Caco-2 (cell line): ENCODE measurements at regions of chr11 and their contacts with region 1.

Region 1: GRCh38 chr11:92286709-92287108 is 62.1 kb downstream of the FAT3 start:
- DNase-seq: peak; percentile 51 to 69
- H3K4me3 ChIP-seq: no peak overlapping the region
- H3K4me3 Mint-ChIP-seq: peak overlapping the region; percentile 50
- H3K27ac Mint-ChIP-seq: peak overlapping the region; percentile 80
- H3K4me1 ChIP-seq: peaks cover 61% of the 10 kb centered on the region
- H3K4me1 Mint-ChIP-seq: peaks cover 68% of the 10 kb centered on the region
- H3K27me3 ChIP-seq: no peaks in the 10 kb centered on the region
- H3K27me3 Mint-ChIP-seq: no peaks in the 10 kb centered on the region
- CTCF ChIP-seq: no peak

Region 2: DNA sequence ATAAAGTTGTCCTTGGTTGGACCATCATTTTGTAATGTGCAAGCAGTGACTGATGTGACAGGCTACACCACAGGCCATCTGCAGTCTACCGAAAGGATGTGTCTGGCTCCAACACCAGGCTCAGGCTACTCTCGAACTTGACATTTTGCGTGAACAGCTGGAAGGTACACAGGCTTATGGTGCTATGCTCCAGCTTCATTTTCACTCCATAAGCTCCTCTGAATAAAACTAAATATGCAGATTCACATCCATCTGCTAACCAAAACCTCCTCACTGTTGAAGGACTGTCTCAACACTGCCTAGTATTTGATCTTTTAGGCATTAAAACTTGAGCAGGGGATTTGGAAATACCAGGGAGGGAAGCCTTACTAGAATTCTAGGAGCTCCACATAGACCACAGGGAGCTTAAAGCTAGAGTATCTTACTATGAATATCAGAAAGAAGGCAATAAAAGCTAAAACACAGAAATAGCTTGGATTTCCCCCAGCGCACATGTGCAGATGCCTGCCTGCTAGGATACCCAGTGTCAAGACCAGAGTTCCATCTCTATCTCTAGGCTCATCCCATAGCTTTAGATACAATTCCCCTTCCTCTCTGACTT is 446.0 kb before region 1 on chr11:
- CTCF ChIA-PET with region 1: no interaction called
- POLR2A ChIA-PET with region 1: no interaction called
- intact Hi-C with region 1: no loop called
- DNase-seq: no peak
- H3K4me3 ChIP-seq: no peak overlapping the region
- H3K4me3 Mint-ChIP-seq: no peak overlapping the region
- H3K27ac Mint-ChIP-seq: no peak overlapping the region
- H3K4me1 ChIP-seq: no peaks in the 10 kb centered on the region
- H3K4me1 Mint-ChIP-seq: peaks cover 7% of the 10 kb centered on the region
- H3K27me3 ChIP-seq: no peaks in the 10 kb centered on the region; the same call in 1 of the 2 replicates
- H3K27me3 Mint-ChIP-seq: no peaks in the 10 kb centered on the region
- CTCF ChIP-seq: no peak

Region 3: GRCh38 chr11:92070026-92070889 is 216.5 kb before region 1 on chr11:
- CTCF ChIA-PET with region 1: no interaction called
- POLR2A ChIA-PET with region 1: no interaction called
- intact Hi-C with region 1: no loop called
- DNase-seq: no peak
- H3K4me3 ChIP-seq: no peak overlapping the region
- H3K4me3 Mint-ChIP-seq: no peak overlapping the region
- H3K27ac Mint-ChIP-seq: no peak overlapping the region
- H3K4me1 ChIP-seq: no peaks in the 10 kb centered on the region
- H3K4me1 Mint-ChIP-seq: no peaks in the 10 kb centered on the region
- H3K27me3 ChIP-seq: no peaks in the 10 kb centered on the region
- H3K27me3 Mint-ChIP-seq: peaks cover 4% of the 10 kb centered on the region
- CTCF ChIP-seq: peak in 1 of 2 experiments; percentile 18

Region 4: DNA sequence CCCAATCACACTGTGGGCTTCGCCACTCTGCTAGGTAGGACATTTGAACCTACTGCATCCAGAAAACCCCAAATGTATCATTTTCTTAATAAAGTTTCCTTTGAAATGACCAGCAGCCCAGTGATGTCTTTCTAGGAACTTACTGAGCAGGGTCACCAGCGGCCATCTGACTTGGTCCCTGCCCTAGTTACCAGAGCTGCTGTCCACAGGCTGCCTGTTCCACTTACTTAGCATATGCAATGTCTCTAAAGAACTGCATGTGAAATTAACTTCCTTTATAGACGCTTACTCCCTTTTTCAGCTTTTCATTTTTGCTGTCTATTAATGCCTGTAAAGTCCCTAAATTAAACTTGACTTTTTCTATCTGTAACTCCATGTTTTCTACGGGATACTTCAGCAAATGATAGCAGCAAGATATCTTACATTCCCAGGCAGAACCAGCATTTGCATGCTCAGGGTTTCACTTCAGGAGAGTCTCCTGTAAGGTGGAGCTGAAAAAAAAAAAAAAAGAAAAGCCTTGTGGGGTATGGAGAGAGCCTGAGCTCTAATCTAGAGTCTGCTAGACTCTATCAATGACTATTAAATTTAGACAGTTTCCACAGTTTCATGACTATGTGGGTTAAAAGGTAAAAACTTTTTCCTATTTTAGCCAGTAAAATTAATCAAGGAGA is 62.9 kb after region 1 on chr11:
- CTCF ChIA-PET with region 1: no interaction called
- POLR2A ChIA-PET with region 1: interaction called, 10 read pairs
- intact Hi-C with region 1: no loop called
- DNase-seq: no peak
- H3K4me3 ChIP-seq: no peak overlapping the region
- H3K4me3 Mint-ChIP-seq: no peak overlapping the region
- H3K27ac Mint-ChIP-seq: no peak overlapping the region
- H3K4me1 ChIP-seq: no peaks in the 10 kb centered on the region
- H3K4me1 Mint-ChIP-seq: no peaks in the 10 kb centered on the region
- H3K27me3 ChIP-seq: no peaks in the 10 kb centered on the region
- H3K27me3 Mint-ChIP-seq: no peaks in the 10 kb centered on the region
- CTCF ChIP-seq: no peak

Region 5: DNA sequence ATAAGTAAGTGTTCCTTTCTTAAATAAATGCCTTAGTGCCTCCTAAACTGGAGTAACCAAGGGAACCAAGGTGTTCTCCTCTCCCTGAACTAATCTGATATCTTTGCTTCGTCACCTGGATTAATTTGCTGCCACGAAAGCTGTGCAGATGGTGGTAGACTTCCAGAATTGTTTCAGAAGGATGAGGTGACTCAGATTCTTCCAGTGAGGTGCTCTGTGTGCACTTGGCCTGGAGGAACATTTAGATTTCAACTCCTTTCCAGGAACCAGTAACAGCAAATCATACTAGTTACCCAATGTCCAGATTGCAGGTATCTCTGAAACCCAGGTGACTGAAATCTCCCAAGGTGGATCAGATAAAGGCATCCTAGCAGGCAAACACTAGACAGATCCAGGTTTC is 119.8 kb after region 1 on chr11:
- CTCF ChIA-PET with region 1: no interaction called
- POLR2A ChIA-PET with region 1: no interaction called
- intact Hi-C with region 1: loop called (anchors 5 kb)
- DNase-seq: no peak
- H3K4me3 ChIP-seq: no peak overlapping the region
- H3K4me3 Mint-ChIP-seq: no peak overlapping the region
- H3K27ac Mint-ChIP-seq: no peak overlapping the region
- H3K4me1 ChIP-seq: peaks cover 21% of the 10 kb centered on the region
- H3K4me1 Mint-ChIP-seq: peaks cover 20% of the 10 kb centered on the region
- H3K27me3 ChIP-seq: no peaks in the 10 kb centered on the region
- H3K27me3 Mint-ChIP-seq: no peaks in the 10 kb centered on the region
- CTCF ChIP-seq: no peak